Activated naive CD4-positive, alpha-beta T cell treated with anti-CD3 and anti-CD28 coated beads for 36 hours (primary cell): ENCODE measurements at regions of chr1 and their contacts with region 1.

Region 1: GRCh38 chr1:209827384-209828262 is at the start of gene UTP25:
- DNase-seq: peak; percentile 97
- H3K4me3 Mint-ChIP-seq: peak within 1 kb of the TSS; percentile 79
- H3K27ac Mint-ChIP-seq: peak within 1 kb of the TSS; percentile 86
- H3K4me1 Mint-ChIP-seq: peaks cover 34% of the 10 kb centered on the region
- H3K27me3 Mint-ChIP-seq: peaks cover 4% of the 10 kb centered on the region
- total RNA-seq, gene UTP25: 4.1 to 4.6 TPM

Region 2: GRCh38 chr1:209576798-209577197 is 250.8 kb before region 1 on chr1:
- CTCF ChIA-PET with region 1: interaction called, 10 read pairs
- intact Hi-C with region 1: no loop called
- DNase-seq: peak; percentile 83
- H3K4me3 Mint-ChIP-seq: no peak overlapping the region
- H3K27ac Mint-ChIP-seq: no peak overlapping the region
- H3K4me1 Mint-ChIP-seq: no peaks in the 10 kb centered on the region
- H3K27me3 Mint-ChIP-seq: no peaks in the 10 kb centered on the region

Region 3: DNA sequence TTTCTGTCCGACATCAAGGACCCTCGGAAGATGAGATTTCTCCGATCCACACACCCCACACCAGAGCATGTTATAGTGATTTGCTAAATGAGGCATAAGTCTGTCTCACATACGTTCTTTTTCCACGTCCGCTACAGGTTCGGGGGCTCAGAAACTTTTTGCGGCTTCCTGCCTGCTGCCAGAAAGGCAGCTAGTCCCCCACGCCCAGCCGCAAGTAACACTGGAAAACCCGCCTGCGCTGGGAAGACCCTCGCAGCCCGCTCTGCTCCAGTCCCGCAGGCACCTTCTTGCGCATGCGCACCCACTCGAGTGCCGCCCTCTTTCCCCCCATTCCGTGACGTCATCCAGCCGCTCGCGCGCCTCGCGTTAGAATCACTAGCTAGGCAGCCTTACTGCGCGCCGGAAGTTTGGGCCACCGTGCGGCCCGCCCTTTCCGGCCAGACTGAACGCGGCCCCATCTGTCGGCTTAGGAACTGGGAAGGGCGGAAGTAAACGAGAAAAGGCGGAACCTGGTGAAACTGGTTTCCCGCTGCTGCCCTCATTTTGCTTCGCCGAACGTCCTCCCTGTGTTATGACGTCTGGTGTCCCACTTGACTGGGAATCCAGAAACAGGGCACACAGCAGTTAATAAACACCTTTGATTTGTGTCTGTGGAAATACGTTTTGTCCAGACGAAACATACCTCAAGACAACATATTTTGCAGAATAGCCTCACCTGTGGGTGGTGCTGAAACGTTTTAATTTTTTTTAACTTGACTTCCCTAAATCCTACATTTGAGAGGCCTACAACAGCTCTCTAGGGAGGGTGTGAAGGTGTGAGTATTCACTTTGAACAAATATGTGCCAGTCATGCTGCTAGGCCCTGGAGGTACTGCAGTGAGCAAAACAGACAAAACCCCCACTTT is 43.1 kb before region 1 on chr1 and contains the start of gene C1orf74:
- CTCF ChIA-PET with region 1: interaction called, 32 read pairs
- intact Hi-C with region 1: loop called (anchors 1 kb)
- DNase-seq: peak; percentile 100
- H3K4me3 Mint-ChIP-seq: peak within 1 kb of the TSS; percentile 92
- H3K27ac Mint-ChIP-seq: peak within 1 kb of the TSS; percentile 97
- H3K4me1 Mint-ChIP-seq: peaks cover 37% of the 10 kb centered on the region
- H3K27me3 Mint-ChIP-seq: no peaks in the 10 kb centered on the region
- total RNA-seq, gene C1orf74: 3.5 to 4.6 TPM

Region 4: DNA sequence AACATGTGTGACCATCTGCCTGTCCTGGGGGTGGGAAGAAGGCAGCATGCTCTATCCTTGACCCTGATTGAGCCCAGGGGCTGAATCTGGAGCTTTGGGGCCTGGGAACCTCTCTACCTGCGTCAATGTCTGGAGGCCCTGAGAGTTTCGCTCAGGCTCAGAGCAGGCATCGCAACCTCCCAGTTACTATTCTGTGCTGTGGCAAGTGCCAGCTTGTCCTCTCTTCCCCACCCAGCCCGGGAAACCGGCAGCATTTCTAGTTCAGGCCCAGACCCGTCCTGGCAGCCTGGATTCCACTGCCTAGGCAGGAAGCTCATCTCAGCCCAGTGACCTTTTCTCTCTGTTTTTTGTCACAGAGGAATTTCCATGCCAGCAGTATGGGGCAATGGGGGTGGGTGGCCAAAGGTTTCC is 11.7 kb before region 1 on chr1:
- CTCF ChIA-PET with region 1: interaction called, 25 read pairs
- intact Hi-C with region 1: no loop called
- DNase-seq: no peak
- H3K4me3 Mint-ChIP-seq: no peak overlapping the region
- H3K27ac Mint-ChIP-seq: peak overlapping the region; percentile 55
- H3K4me1 Mint-ChIP-seq: peaks cover 12% of the 10 kb centered on the region
- H3K27me3 Mint-ChIP-seq: peaks cover 6% of the 10 kb centered on the region

Region 5: DNA sequence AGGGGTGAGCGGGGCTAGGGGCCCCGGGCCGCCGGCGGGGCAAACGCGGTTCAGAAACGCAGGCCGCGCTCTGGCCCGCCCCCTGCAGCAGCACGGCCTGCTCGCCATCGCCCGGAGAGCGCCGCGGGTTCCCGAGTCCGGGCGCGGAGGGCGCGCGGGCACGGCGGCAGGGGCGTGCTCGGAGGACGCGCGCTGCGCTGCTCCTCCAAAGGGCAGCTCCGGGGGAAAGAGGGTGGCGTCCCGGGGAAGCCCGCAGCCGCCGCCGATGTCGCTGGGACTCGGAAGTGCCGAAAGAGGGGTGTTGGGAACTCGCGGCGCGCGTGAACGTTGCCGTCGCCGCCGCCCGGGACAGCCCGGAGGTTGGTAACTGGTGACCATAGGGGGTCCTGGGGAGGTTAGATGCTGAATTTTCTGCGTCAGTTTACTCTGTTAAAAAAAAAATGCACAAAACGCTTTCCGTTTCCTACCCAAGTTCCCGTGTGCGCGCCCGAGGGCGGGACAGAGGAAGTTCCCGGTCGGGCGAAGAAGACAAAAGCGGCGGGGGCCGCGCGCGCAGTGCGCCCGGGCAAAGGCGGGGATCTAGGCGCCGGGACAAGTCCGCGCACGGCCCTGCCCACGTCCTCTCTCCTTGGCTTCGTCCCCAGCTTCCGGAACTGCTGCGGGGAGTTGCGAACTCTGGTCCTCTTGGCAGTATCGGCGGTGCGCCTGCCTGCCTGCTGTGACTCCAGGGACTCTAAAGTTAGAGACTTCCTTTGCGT is 501.3 kb after region 1 on chr1 and contains the start of gene HHAT:
- CTCF ChIA-PET with region 1: no interaction called
- intact Hi-C with region 1: loop called (anchors 1 kb)
- DNase-seq: peak; percentile 84
- H3K4me3 Mint-ChIP-seq: peak within 1 kb of the TSS; percentile 93
- H3K27ac Mint-ChIP-seq: peak within 1 kb of the TSS; percentile 95
- H3K4me1 Mint-ChIP-seq: peaks cover 41% of the 10 kb centered on the region
- H3K27me3 Mint-ChIP-seq: peaks cover 4% of the 10 kb centered on the region
- total RNA-seq, gene HHAT: 3.6 to 3.9 TPM